Dorsolateral prefrontal cortex (tissue), 120 donors: ENCODE measurements at regions of chr1 and their contacts with region 1.

Region 1: GRCh38 chr1:167220537-167221125 is at the start of gene POU2F1:
- DNase-seq: peak; percentile 95 to 97 (median 96)
- H3K4me3 ChIP-seq: peak within 1 kb of the TSS; percentile 67 to 100 (median 95)
- H3K27ac ChIP-seq: peak within 1 kb of the TSS; percentile 87 to 99 (median 97)
- H3K27me3 ChIP-seq: no peaks in the 10 kb centered on the region
- CTCF ChIP-seq: peak in 55 of 56 donors; percentile 39 to 86 (median 64)
- total RNA-seq, gene POU2F1: 14.7 to 50.1 (median 30.5) TPM

Region 2: DNA sequence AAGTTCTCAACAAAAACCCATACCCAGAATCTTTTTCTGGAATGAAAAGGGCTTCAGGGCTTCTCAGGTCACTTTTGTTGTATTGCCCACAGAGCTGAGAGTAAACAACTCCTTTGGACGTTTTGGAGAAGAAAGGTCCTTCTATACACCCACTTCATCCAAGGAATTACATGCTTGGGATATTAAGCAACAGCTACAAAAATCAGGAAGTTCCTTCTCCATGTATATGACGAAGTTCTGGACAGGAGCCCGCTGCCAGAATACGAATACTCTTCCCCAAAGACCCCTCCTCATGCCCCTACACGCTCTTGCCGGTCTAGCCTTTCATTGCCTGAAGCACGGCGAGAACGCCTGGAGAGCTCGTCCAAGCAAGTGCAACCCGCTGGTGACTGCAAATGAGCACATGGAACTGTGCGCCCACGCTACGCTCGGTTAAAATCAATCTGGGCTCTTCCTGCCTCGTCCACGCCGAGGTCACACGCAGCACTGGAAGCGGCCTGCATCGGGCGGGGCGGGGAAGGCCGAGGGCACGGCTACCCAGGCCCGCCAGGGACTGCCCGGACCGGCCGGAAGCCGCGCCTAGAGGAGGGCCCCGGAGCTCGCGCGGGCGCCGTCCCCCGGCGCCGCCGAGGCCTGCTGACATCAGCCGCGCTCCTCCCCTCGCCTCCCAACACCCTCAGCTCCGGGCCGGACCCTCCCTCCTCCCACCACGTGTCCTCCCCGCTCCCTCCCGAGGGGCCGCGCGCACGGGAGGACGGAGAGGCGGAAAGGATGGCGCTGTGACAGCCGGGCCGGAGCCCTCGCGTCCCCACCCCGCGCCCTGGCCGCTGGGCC is 381.6 kb before region 1 on chr1 and contains the start of gene POGK:
- intact Hi-C with region 1: loop called in 1 of 2 experiments (anchors 5 kb)
- DNase-seq: peak; percentile 84 to 96 (median 91)
- H3K4me3 ChIP-seq: peak within 1 kb of the TSS; percentile 58 to 88 (median 76)
- H3K27ac ChIP-seq: peak within 1 kb of the TSS; percentile 75 to 99 (median 96)
- H3K27me3 ChIP-seq: no peaks in the 10 kb centered on the region
- CTCF ChIP-seq: peak in 34 of 56 donors; percentile 17 to 60 (median 34)
- total RNA-seq, gene POGK: 37.1 to 98.5 (median 49.7) TPM

Region 3: GRCh38 chr1:167016100-167016750 is 204.4 kb before region 1 on chr1:
- intact Hi-C with region 1: no loop called
- DNase-seq: no peak
- H3K4me3 ChIP-seq: no peak overlapping the region
- H3K27ac ChIP-seq: no peak overlapping the region
- H3K27me3 ChIP-seq: no peaks in the 10 kb centered on the region
- CTCF ChIP-seq: no peak

Region 4: GRCh38 chr1:167066333-167067122 is 154.1 kb before region 1 on chr1:
- intact Hi-C with region 1: loop called (anchors 2 kb)
- DNase-seq: peak; percentile 60 to 89 (median 78)
- H3K4me3 ChIP-seq: peak overlapping the region in 54 of 59 donors; percentile 7 to 66 (median 42)
- H3K27ac ChIP-seq: peak overlapping the region in 6 of 59 donors; percentile 0 to 67 (median 42)
- H3K27me3 ChIP-seq: no peaks in the 10 kb centered on the region
- CTCF ChIP-seq: peak; percentile 68 to 100 (median 97)

Region 5: DNA sequence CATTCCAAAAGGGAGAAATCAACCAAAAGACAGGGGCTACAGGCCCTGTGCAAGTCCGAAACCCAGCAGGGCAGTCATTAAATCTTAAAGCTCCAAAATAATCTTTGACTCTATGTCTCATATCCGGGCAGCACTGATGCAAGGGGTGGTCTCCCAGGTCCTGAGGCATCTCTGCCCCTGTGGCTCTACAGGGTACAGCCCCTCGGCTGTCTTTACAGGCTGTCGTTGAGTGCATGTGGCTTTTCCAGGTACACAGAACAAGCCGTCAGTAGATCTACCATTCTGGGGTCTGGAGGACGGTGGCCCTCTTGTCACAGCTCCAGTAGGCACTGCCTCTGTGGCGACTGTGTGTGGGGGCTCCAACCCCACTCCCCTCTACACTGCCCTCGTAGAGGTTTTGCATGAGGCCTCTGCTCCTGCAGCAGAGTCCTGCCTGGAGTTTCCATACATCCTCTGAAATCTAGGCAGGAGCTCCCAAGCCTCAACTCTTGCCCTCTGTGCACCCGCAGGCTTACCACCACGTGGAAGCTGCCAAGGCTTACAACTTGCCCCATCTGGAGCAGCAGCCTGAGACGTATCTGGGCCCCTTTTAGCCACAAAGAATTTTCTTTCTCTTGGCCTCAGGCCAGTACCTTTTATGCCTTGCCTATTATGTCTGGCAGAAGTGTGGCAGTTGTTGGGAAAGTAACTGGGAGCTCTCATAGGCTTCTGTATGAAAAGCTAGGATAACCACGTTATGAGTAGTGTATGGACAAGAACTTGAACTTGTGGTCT is 52.6 kb after region 1 on chr1:
- intact Hi-C with region 1: loop called in 1 of 2 experiments (anchors 5 kb)
- DNase-seq: no peak
- H3K4me3 ChIP-seq: no peak overlapping the region
- H3K27ac ChIP-seq: peak overlapping the region in 9 of 59 donors; percentile 5 to 44 (median 26)
- H3K27me3 ChIP-seq: no peaks in the 10 kb centered on the region
- CTCF ChIP-seq: no peak

Region 6: GRCh38 chr1:167553136-167554027 is 332.8 kb after region 1 on chr1 and contains the start of gene CREG1:
- intact Hi-C with region 1: loop called (anchors 5 to 10 kb)
- DNase-seq: peak; percentile 88 to 96 (median 93)
- H3K4me3 ChIP-seq: peak within 1 kb of the TSS; percentile 61 to 93 (median 85)
- H3K27ac ChIP-seq: peak within 1 kb of the TSS; percentile 2 to 93 (median 80)
- H3K27me3 ChIP-seq: no peaks in the 10 kb centered on the region
- CTCF ChIP-seq: peak in 34 of 56 donors; percentile 4 to 64 (median 29)
- total RNA-seq, gene CREG1: 21.6 to 57.2 (median 42.1) TPM